ENCODE measurements at regions of chr19 and their contacts with region 1.

Region 1: DNA sequence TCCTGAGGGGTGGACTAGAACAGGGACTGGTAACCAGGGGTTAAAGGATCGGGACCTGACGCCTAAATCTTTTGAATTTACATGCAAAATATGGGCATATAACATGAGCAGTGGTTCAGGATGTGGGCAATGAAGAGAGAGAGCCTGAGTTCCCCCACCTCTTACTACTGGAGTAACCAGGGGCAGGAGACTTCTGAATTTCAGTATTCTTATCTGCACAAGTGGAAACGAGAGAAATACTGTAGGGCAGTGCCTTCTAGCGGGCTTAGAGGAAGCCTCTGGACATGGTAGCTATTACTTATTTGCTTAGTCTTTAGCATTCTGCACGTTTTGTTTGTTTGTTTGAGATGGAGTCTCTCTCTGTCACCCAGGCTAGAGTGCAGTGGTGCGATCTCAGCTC is 26.3 kb downstream of the BCAT2 start:
- DNase-seq: no peak
- H3K4me3 Mint-ChIP-seq: no peak overlapping the region
- H3K27ac Mint-ChIP-seq: no peak overlapping the region
- H3K4me1 Mint-ChIP-seq: no peaks in the 10 kb centered on the region
- H3K27me3 Mint-ChIP-seq: peaks cover 9% of the 10 kb centered on the region

Region 2: GRCh38 chr19:48835734-48836088 is 51.2 kb after region 1 on chr19:
- intact Hi-C with region 1: loop called (anchors 1 kb)
- DNase-seq: peak; percentile 87
- H3K4me3 Mint-ChIP-seq: peak overlapping the region; percentile 84
- H3K27ac Mint-ChIP-seq: peak overlapping the region; percentile 87
- H3K4me1 Mint-ChIP-seq: peaks cover 23% of the 10 kb centered on the region
- H3K27me3 Mint-ChIP-seq: peaks cover 7% of the 10 kb centered on the region

Region 3: DNA sequence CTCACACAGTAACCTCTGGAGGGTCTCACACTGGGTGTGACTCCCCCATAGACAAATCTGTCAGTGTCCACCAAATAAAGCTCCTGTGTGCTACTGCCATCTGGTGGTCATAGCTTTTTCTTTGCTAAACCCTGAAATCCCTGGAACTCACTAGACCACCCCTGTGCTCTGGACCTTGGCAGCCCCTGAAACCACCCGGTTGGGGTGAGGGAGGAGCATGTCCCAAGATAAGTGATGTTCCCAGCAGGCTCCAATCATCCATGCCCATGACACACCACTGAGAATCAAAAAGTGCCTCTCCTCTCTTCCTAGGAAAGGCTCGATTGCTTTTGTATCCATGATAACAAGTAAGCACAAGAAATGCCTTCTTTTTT is 58.2 kb after region 1 on chr19:
- intact Hi-C with region 1: loop called (anchors 1 kb)
- DNase-seq: peak; percentile 22
- H3K4me3 Mint-ChIP-seq: no peak overlapping the region
- H3K27ac Mint-ChIP-seq: no peak overlapping the region
- H3K4me1 Mint-ChIP-seq: no peaks in the 10 kb centered on the region
- H3K27me3 Mint-ChIP-seq: peaks cover under 1% of the 10 kb centered on the region

Region 4: GRCh38 chr19:48970923-48971395 is 186.4 kb after region 1 on chr19:
- intact Hi-C with region 1: loop called (anchors 1 kb)
- DNase-seq: peak; percentile 72
- H3K4me3 Mint-ChIP-seq: no peak overlapping the region
- H3K27ac Mint-ChIP-seq: peak overlapping the region; percentile 41
- H3K4me1 Mint-ChIP-seq: peaks cover 25% of the 10 kb centered on the region
- H3K27me3 Mint-ChIP-seq: no peaks in the 10 kb centered on the region

Region 5: DNA sequence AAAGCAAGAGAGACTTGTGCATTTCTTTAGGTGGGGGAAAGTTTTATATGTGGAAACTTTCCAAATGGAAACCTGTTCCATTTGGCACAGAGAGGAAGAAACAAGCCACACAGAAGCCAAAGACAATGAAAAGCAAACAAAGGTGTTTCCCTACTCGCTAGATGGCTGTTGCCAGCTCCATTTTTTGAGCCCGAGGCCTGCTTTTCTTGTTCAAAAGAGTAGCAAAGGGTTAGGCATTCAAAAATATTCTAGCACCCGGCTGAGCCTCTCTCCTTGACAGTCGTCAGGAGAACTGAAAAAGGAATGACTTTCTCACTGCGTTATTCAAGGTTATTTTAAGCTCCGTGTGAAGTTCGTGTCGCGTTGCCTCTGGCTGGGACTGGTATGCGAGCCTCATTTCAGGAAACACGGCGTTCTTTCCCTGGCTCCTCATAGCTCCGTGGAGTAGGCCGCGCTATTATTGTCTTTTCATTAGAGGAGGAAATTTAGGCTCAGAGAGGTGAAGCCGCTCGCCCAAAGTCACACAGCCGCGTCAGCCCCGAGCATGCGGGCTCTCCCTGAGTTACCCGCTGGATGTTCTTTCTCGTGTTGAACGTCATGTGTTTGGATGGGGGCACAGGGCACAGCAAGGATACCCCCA is 380.7 kb after region 1 on chr19:
- intact Hi-C with region 1: no loop called
- DNase-seq: no peak
- H3K4me3 Mint-ChIP-seq: no peak overlapping the region
- H3K27ac Mint-ChIP-seq: no peak overlapping the region
- H3K4me1 Mint-ChIP-seq: no peaks in the 10 kb centered on the region
- H3K27me3 Mint-ChIP-seq: peaks cover 8% of the 10 kb centered on the region